ENCODE measurements at regions of chr16 and their contacts with region 1.

Region 1: GRCh38 chr16:73558219-73558618 is 510.3 kb upstream of the ZFHX3 start:
- DNase-seq: no peak
- H3K4me3 ChIP-seq: no peak overlapping the region
- H3K27ac ChIP-seq: no peak overlapping the region
- H3K4me1 ChIP-seq: no peaks in the 10 kb centered on the region
- H3K27me3 ChIP-seq: no peaks in the 10 kb centered on the region
- CTCF ChIP-seq: no peak
- POLR2A ChIP-seq: no peak

Region 2: GRCh38 chr16:72501739-72502593 is 1056.3 kb before region 1 on chr16:
- intact Hi-C with region 1: loop called (anchors 5 kb)
- DNase-seq: no peak
- H3K4me3 ChIP-seq: no peak overlapping the region
- H3K27ac ChIP-seq: no peak overlapping the region
- H3K4me1 ChIP-seq: no peaks in the 10 kb centered on the region
- H3K27me3 ChIP-seq: no peaks in the 10 kb centered on the region
- CTCF ChIP-seq: peak in 2 of 3 donors; percentile 19 to 66
- POLR2A ChIP-seq: no peak